ENCODE measurements at regions of chr4 and their contacts with region 1.

Region 1: DNA sequence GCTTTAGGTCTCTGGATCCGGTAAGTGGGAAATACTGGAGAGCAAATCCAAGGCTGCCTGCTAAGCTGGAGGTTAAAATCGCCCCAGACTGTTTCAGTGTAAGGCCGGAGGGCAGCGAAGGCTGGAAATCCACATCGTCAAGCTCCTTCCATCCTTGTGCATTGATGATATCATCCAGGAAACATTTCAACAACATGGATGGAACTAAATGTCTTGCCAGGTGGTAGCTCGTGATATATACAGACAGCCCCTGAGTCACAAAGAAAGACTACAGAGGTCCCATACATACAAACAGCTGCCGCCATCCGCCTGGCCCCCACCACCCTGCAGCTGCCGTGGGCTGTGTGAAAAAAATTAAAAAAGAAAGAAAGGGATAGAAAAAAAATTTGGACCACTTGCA is 148.9 kb upstream of the RBPJ start:
- DNase-seq: peak; percentile 100
- ATAC-seq: peak; percentile 73
- H3K4me3 ChIP-seq: no peak overlapping the region
- H3K27ac ChIP-seq: peak overlapping the region; percentile 87
- H3K4me1 ChIP-seq: peaks cover 26% of the 10 kb centered on the region
- H3K27me3 ChIP-seq: no peaks in the 10 kb centered on the region
- CTCF ChIP-seq: no peak
- POLR2A ChIP-seq: no peak
- RAD21 ChIP-seq: peak; percentile 22

Region 2: DNA sequence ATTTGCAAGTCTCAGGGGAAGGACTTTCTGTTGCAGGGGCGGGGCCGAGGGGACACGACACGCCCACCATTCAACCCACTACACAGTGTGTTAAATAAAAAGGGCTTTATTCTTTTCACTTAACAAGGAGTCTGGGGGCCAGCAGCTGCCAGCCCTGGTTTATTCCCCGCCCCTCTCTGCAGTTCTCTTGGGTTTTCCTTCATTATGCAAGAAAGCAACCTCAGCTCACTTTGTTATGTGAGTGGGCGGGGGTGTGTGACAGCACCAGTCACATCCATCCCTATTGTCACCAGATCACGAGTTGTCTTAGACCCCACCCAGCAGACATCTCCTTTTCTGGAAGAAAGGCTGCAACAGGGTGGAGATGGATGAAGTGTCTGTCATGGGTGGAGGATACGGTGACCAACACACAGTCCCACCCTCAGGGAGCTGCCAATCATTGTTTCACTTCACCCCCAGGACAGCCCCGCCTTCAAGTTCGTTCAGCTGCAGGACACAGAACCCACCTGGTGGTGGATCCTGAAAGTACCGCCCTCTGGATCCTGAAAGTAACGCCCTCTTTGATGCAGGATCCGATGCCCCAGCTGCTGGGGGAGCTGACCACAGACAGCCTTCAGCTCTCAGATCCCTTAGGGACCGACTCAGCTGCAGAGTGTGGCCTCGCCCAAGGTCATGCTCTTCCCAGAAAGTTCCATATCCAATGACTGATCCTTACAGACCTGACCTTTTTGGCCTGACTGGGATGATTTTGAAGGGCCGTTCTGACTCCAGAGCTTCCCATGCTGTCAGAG is 178.4 kb before region 1 on chr4:
- CTCF ChIA-PET with region 1: no interaction called
- POLR2A ChIA-PET with region 1: no interaction called
- dilution Hi-C with region 1: no loop called
- in situ Hi-C with region 1: no loop called
- intact Hi-C with region 1: loop called (anchors 2 kb)
- DNase-seq: no peak
- ATAC-seq: no peak
- H3K4me3 ChIP-seq: no peak overlapping the region
- H3K27ac ChIP-seq: no peak overlapping the region
- H3K4me1 ChIP-seq: 0 out of 2 replicates have a peak, but pooled peaks cover 2% of the 10 kb centered on the region
- H3K27me3 ChIP-seq: no peaks in the 10 kb centered on the region
- CTCF ChIP-seq: 0 out of 2 replicates have a peak, but pooled peaks have one; percentile 8
- POLR2A ChIP-seq: no peak
- RAD21 ChIP-seq: no peak

Region 3: GRCh38 chr4:26022346-26023202 is 149.4 kb before region 1 on chr4:
- CTCF ChIA-PET with region 1: no interaction called
- POLR2A ChIA-PET with region 1: no interaction called
- dilution Hi-C with region 1: no loop called
- in situ Hi-C with region 1: no loop called
- intact Hi-C with region 1: loop called (anchors 5 kb)
- DNase-seq: peak; percentile 80
- ATAC-seq: peak; percentile 51
- H3K4me3 ChIP-seq: no peak overlapping the region
- H3K27ac ChIP-seq: peak overlapping the region; percentile 8; the same call in 1 of the 2 replicates
- H3K4me1 ChIP-seq: peaks cover 16% of the 10 kb centered on the region
- H3K27me3 ChIP-seq: peaks cover 5% of the 10 kb centered on the region
- CTCF ChIP-seq: no peak
- POLR2A ChIP-seq: no peak
- RAD21 ChIP-seq: no peak

Region 4: DNA sequence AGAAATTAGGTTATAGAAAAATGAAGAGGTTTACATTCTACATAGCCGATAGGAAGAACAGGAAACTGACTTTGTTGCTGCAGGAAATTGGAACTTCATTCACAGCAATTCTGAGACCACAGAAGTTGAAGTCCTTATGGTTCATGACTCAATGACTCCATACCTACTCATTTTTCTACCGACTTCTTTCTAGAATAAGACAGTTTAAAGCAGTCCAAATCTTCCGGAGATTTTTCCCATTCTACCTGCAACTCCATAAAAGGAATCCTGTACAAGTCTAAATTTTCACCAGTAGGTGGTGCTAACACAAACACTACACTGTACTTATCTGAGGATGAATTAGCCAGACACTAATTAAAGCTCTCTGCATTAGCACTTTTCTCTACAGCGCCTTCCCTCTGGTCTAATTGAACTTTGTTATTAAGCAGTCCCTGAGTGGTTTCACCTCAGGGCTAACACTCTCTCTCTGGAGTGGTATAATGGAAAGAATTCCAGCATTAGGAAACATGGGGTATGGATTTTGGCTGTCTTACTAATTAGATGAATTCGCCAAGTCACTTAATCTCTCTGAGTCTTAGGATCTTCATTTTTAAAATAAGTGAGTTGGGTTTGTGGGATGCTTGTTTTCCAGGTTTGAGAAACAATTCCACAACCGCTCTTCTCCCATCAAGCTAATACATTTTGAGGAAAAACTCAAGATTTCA is 90.0 kb before region 1 on chr4:
- CTCF ChIA-PET with region 1: no interaction called
- POLR2A ChIA-PET with region 1: no interaction called
- dilution Hi-C with region 1: no loop called
- in situ Hi-C with region 1: no loop called
- intact Hi-C with region 1: loop called (anchors 2 kb)
- DNase-seq: peak; percentile 52
- ATAC-seq: no peak
- H3K4me3 ChIP-seq: no peak overlapping the region
- H3K27ac ChIP-seq: no peak overlapping the region
- H3K4me1 ChIP-seq: peaks cover 15% of the 10 kb centered on the region
- H3K27me3 ChIP-seq: no peaks in the 10 kb centered on the region
- CTCF ChIP-seq: peak; percentile 57
- POLR2A ChIP-seq: no peak
- RAD21 ChIP-seq: peak; percentile 58

Region 5: DNA sequence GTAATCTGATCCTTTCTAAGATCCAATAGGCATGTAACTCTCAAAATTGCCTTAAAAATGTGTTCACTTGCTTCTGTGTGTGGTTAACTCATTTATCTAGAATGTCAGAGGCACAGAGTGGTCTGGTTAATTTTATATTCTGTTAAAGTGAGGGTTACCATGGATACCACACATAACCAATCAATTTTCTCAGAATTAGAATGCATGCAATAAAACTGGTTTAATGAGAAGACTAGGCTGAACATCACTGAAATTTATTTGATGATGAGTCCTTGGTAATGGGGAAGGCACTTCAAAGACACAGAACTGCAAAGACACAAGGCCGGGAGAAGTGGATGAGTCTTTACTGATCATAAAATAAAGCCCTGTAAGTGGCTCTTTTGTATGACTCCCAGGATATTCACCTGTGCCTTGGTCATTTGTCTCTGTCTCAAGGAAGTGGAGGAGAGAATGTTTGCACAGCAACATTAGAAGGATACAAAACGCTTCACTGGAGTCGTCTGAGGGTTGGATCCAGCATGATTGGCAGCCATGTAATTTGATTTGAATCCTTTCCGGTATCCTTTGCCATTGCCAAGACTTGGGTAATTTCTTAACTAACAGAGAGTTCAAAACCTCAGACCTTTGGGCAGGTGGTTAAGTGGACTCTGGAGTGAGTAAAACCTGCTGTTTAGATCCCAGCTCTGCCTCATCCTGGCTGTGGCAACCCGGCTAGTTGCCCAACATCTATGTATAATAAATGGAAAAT is 54.9 kb after region 1 on chr4:
- CTCF ChIA-PET with region 1: no interaction called
- POLR2A ChIA-PET with region 1: no interaction called
- dilution Hi-C with region 1: no loop called
- in situ Hi-C with region 1: no loop called
- intact Hi-C with region 1: no loop called
- DNase-seq: no peak
- ATAC-seq: no peak
- H3K4me3 ChIP-seq: no peak overlapping the region
- H3K27ac ChIP-seq: no peak overlapping the region
- H3K4me1 ChIP-seq: peaks cover 6% of the 10 kb centered on the region
- H3K27me3 ChIP-seq: no peaks in the 10 kb centered on the region
- CTCF ChIP-seq: no peak
- POLR2A ChIP-seq: no peak
- RAD21 ChIP-seq: no peak

Region 6: DNA sequence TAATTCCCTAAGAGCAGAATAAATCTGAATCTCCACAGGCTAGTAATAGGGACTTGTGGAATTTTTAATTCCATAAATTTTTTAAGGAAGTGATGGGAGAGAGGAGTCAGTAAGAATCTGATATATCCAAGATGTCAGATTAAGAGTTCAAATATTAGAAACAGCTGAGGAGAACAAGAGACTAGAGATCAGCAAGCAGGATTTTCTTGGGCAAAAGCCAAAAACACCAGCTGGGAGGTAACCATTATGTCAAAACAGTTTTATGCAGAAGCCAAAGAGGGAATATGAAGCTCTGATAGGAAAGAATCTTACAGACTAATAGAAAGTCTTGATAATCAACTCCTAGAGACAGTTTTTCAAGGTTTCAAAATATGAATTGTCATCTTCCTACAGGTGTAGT is 76.7 kb after region 1 on chr4:
- CTCF ChIA-PET with region 1: no interaction called
- POLR2A ChIA-PET with region 1: no interaction called
- dilution Hi-C with region 1: no loop called
- in situ Hi-C with region 1: no loop called
- intact Hi-C with region 1: no loop called
- DNase-seq: peak; percentile 88
- ATAC-seq: peak; percentile 67
- H3K4me3 ChIP-seq: no peak overlapping the region
- H3K27ac ChIP-seq: no peak overlapping the region
- H3K4me1 ChIP-seq: 0 out of 2 replicates have a peak, but pooled peaks cover 2% of the 10 kb centered on the region
- H3K27me3 ChIP-seq: no peaks in the 10 kb centered on the region
- CTCF ChIP-seq: no peak
- POLR2A ChIP-seq: no peak
- RAD21 ChIP-seq: no peak